AG04449 (cell line): ENCODE measurements at regions of chr10 and their contacts with region 1.

Region 1: GRCh38 chr10:77165445-77166208 is 472.0 kb downstream of the KCNMA1 start:
- DNase-seq: no peak
- H3K4me3 ChIP-seq: no peak overlapping the region
- CTCF ChIP-seq: peak; percentile 73

Region 2: DNA sequence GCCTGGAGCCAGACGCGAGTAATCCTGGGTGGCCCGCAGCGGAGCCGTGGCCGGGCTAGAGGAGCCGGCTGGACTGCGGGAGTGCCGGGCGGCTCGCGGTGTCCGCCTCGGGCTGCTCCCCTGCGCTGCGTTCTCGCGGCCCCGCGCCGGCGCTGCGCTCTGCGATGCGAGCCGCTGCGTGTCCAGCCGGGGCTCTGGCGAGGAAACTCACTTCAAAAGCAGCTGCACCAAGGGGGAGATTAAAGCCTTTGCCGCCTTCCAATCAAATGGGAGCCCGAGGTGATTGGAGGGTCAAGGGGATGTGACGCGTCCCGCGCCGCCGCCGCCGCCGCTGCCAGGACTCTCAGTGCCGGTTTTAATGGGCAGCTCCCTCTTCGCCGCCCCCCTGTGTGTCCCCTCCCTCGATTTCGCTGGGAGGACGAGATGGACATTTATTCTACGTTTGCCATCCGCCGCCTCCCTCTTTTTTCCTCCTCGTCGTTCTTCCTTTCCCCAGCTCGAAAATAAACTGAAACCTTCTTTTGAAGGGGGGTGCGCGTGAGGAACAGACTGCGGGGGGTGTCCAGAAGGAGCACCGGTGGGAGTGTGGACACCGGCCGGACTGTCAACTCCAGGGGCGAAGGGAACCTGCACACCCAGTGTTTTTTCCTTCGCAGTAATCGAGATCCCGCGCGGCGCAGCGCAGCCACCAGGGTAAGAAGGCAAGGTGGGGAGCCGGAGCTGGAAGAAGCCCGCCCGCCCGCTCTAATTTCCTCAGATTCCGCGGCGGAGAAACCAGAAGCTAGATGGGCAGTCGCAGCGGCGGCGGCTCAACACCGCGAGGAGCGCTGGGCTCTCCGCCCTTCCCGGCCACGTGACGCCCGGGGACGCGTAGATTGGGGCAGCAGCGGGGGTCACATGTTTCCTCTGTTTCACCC is 1763.8 kb before region 1 on chr10 and contains the start of gene ZNF503:
- CTCF ChIA-PET with region 1: no interaction called
- POLR2A ChIA-PET with region 1: no interaction called
- DNase-seq: peak; percentile 76
- H3K4me3 ChIP-seq: peak within 1 kb of the TSS; percentile 96
- CTCF ChIP-seq: peak; percentile 18

Region 3: DNA sequence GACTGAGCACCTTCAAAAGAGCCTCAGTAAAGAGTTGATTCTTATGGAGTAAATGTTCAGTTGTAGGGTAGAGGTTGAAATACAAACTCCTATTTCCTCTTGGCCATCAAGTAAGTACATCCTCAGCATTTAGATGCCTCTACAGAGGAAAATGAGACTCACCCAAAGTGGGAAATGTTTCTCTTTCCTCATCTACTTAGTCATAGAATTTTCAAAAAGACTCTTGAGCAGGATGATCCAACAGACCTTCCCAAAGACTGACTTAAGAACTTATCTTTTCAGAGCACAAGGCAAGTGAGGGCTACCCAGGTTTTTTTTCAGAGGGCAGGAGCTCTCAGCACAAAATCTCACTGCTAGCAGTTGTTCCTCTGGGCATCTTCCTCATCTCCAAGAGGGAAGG is 22.9 kb after region 1 on chr10:
- CTCF ChIA-PET with region 1: interaction called, 10 read pairs
- POLR2A ChIA-PET with region 1: no interaction called
- DNase-seq: no peak
- H3K4me3 ChIP-seq: no peak overlapping the region
- CTCF ChIP-seq: no peak

Region 4: GRCh38 chr10:77391605-77392235 is 226.1 kb after region 1 on chr10:
- CTCF ChIA-PET with region 1: interaction called, 127 read pairs
- POLR2A ChIA-PET with region 1: interaction called, 4 read pairs
- DNase-seq: peak; percentile 49
- H3K4me3 ChIP-seq: no peak overlapping the region
- CTCF ChIP-seq: peak; percentile 83

Region 5: GRCh38 chr10:77524281-77524711 is 358.7 kb after region 1 on chr10:
- CTCF ChIA-PET with region 1: interaction called, 14 read pairs
- POLR2A ChIA-PET with region 1: no interaction called
- DNase-seq: peak; percentile 92
- H3K4me3 ChIP-seq: peak overlapping the region; percentile 4; the same call in 1 of the 2 replicates
- CTCF ChIP-seq: no peak

Region 6: GRCh38 chr10:77756319-77757232 is 590.9 kb after region 1 on chr10:
- CTCF ChIA-PET with region 1: interaction called, 16 read pairs
- POLR2A ChIA-PET with region 1: no interaction called
- DNase-seq: no peak
- H3K4me3 ChIP-seq: no peak overlapping the region
- CTCF ChIP-seq: peak; percentile 79

Region 7: DNA sequence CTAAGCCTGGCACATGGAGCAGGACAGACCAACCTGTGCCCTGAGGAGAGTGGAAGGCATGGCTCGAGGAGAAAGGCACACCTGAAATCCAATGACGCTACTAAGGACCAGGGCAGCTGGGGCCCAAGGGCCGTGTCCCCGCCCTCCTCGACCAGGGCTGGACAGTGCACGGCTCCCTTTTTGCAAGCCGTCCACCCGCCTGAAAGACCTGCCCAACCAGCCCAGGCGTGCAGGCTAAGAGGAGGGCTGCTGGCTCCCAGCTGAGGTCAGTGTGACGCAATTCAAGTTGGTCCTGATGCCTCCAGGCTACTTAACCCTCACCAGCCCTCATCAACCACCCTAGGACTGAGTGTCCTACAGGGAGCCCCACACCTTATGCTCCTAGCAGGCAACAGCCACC is 691.6 kb after region 1 on chr10:
- CTCF ChIA-PET with region 1: no interaction called
- POLR2A ChIA-PET with region 1: no interaction called
- DNase-seq: no peak
- H3K4me3 ChIP-seq: no peak overlapping the region
- CTCF ChIP-seq: no peak